Dendritic cell treated with granulocyte-macrophage colony-stimulating factor and Interleukin-4, amounts not matched to agents 40 ng/mL and 50 ng/mL, for 4 days (primary cell): ENCODE measurements at regions of chr12 and their contacts with region 1.

Region 1: GRCh38 chr12:25074954-25075353 is 120.0 kb downstream of the DNAI7 start:
- H3K4me3 Mint-ChIP-seq: no peak overlapping the region
- H3K27ac Mint-ChIP-seq: peak overlapping the region; percentile 82
- H3K4me1 Mint-ChIP-seq: peaks cover 51% of the 10 kb centered on the region
- H3K27me3 Mint-ChIP-seq: no peaks in the 10 kb centered on the region

Region 2: GRCh38 chr12:25089738-25090137 is 14.8 kb after region 1 on chr12:
- intact Hi-C with region 1: no loop called
- H3K4me3 Mint-ChIP-seq: no peak overlapping the region
- H3K27ac Mint-ChIP-seq: no peak overlapping the region
- H3K4me1 Mint-ChIP-seq: peaks cover 32% of the 10 kb centered on the region
- H3K27me3 Mint-ChIP-seq: no peaks in the 10 kb centered on the region

Region 3: DNA sequence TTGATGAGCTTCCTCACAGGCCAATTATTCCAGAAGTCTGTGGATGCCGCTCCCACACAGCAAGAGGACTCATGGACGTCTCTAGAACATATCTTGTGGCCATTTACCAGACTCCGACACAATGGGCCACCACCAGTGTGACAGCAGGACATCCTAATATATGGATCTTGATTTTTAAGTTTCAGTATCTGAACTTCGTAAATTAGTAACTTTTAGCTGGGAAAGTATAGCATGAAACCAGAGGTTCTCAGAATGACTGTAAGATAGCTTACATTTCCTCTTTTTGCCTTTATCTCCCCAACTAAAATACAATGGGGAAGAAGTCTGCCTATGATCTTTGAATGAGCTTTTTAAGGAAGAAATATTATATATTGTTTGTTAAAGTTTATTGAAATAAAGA is 33.0 kb after region 1 on chr12:
- intact Hi-C with region 1: loop called (anchors 5 kb)
- H3K4me3 Mint-ChIP-seq: no peak overlapping the region
- H3K27ac Mint-ChIP-seq: peak overlapping the region; percentile 51
- H3K4me1 Mint-ChIP-seq: peaks cover 12% of the 10 kb centered on the region
- H3K27me3 Mint-ChIP-seq: no peaks in the 10 kb centered on the region

Region 4: DNA sequence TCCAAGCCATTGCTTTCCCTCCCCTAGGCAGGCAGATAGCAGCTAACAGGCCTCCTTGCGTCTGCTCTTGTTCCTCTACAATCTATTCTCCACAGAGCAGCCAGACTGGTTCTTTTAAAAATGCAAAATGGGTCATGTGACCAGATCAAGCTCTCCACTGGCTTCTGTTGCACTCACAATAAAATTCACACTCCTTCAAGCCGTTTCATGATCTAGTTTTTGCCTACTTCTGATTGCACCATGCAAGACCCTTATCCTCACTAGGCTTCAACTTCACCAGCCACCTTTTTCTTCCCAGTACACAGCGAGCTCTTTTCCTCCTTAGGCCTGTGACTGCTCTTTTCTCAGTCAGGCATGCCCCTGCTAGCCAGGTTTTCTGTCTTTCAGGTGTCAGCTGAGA is 181.9 kb after region 1 on chr12:
- intact Hi-C with region 1: no loop called
- H3K4me3 Mint-ChIP-seq: no peak overlapping the region
- H3K27ac Mint-ChIP-seq: no peak overlapping the region
- H3K4me1 Mint-ChIP-seq: no peaks in the 10 kb centered on the region
- H3K27me3 Mint-ChIP-seq: peaks cover 10% of the 10 kb centered on the region

Region 5: GRCh38 chr12:25276199-25276937 is 201.4 kb after region 1 on chr12:
- intact Hi-C with region 1: no loop called
- H3K4me3 Mint-ChIP-seq: no peak overlapping the region
- H3K27ac Mint-ChIP-seq: no peak overlapping the region
- H3K4me1 Mint-ChIP-seq: no peaks in the 10 kb centered on the region
- H3K27me3 Mint-ChIP-seq: no peaks in the 10 kb centered on the region